A549 (cell line): ENCODE measurements at regions of chr5 and their contacts with region 1.

Region 1: DNA sequence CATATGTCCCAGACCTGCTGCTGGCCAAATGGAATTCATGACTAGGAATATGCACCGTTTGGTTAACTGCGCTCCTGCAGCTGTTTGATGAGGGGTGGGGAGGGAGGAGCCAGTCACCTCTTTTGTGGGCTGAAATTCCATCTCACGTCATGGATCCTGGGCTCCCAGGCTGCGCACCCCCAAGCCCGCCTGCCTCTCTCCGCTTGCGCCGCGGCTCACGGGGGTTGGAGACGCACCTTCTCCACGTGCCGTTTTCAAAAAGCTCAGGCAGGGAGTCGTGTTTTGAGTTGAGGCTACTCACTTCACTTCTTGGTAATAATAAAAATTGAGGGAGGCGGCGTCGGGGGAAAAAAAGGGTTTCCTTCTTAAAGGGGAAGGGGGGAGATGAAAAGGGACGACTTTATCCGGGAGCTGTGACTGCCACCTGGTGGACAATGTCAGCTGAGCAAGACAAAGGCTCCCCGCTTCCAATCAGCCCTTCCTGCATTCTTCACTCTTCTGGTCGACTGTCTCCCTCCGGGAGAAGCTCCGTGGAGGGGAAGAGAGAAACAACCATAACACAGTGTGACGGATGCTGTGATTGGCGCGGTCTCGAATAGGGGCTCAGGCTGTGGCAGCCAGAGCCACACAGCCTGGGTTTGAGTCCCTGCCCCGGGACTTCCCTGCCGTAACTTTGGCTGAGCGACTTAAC is 15.9 kb upstream of the C5orf47 start:
- DNase-seq: peak; percentile 83 to 86
- ATAC-seq: peak; percentile 55 to 72
- H3K4me3 ChIP-seq: peak overlapping the region; percentile 35; the same call in 2 of the 3 replicates
- H3K27ac ChIP-seq: peak overlapping the region; percentile 96 to 97
- H3K4me1 ChIP-seq: peaks cover 53% of the 10 kb centered on the region
- CTCF ChIP-seq: peak; percentile 94
- EP300 ChIP-seq: no peak
- POLR2A ChIP-seq: no peak
- RAD21 ChIP-seq: peak; percentile 97 to 99

Region 2: GRCh38 chr5:173887610-173888472 is 85.2 kb before region 1 on chr5 and contains the start of gene CPEB4:
- CTCF ChIA-PET with region 1: interaction called, 11 read pairs
- POLR2A ChIA-PET with region 1: interaction called, 8 read pairs
- DNase-seq: peak; percentile 99
- ATAC-seq: peak; percentile 97 to 98
- H3K4me3 ChIP-seq: peak within 1 kb of the TSS; percentile 83
- H3K27ac ChIP-seq: peak within 1 kb of the TSS; percentile 93 to 98
- H3K4me1 ChIP-seq: peaks cover 20% of the 10 kb centered on the region
- CTCF ChIP-seq: no peak
- EP300 ChIP-seq: no peak
- POLR2A ChIP-seq: peak; percentile 69
- RAD21 ChIP-seq: no peak; a peak in 1 of 5 replicates
- polyA plus RNA-seq, gene CPEB4: 49.1 and 50.0 TPM in 2 replicates

Region 3: GRCh38 chr5:173953528-173954090 is 19.5 kb before region 1 on chr5:
- CTCF ChIA-PET with region 1: interaction called, 11 read pairs
- POLR2A ChIA-PET with region 1: no interaction called
- DNase-seq: peak in 1 of 2 experiments; percentile 37
- ATAC-seq: peak; percentile 56 to 82; a peak in 5 of 6 replicates
- H3K4me3 ChIP-seq: no peak overlapping the region
- H3K27ac ChIP-seq: peak overlapping the region; percentile 38 to 52; a peak in 4 of 6 replicates
- H3K4me1 ChIP-seq: peaks cover 30% of the 10 kb centered on the region
- CTCF ChIP-seq: no peak
- EP300 ChIP-seq: no peak; a peak in 1 of 5 replicates
- POLR2A ChIP-seq: no peak
- RAD21 ChIP-seq: no peak

Region 4: DNA sequence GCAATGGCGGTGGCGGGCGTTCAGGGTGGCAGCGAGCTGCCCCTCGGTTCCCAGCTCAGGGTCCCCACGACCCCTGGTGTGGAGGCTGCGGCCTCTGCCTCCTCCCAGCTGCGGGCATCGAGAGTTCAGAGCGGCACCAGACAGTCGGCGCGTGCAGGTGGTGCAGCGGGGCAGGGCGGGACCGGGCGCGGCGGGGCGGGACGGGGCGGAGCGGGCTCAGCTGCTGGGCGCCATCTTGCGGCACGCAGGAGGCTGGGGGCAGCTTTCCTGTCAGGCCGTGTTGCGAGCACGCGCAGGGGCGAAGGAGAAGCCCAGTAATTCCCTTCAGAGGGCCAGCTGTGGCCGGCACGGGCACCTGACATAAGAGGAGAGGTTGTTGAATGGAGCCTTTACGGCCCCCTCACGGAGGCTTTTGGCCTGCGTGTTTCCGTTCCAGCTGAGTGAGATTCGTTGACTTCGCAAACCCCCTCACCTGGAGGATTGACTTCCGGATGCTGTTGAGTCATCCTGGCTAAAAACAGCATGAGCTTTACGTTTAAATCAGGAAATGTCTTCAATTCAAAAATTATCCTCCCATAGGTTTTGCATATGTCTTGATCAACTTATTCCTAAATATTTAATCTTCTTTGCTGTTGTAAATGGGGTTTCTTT is 16.5 kb after region 1 on chr5:
- CTCF ChIA-PET with region 1: interaction called, 43 read pairs
- POLR2A ChIA-PET with region 1: interaction called, 5 read pairs
- DNase-seq: no peak
- ATAC-seq: no peak
- H3K4me3 ChIP-seq: no peak overlapping the region
- H3K27ac ChIP-seq: no peak overlapping the region
- H3K4me1 ChIP-seq: no peaks in the 10 kb centered on the region
- CTCF ChIP-seq: no peak
- EP300 ChIP-seq: no peak
- POLR2A ChIP-seq: no peak
- RAD21 ChIP-seq: no peak

Region 5: DNA sequence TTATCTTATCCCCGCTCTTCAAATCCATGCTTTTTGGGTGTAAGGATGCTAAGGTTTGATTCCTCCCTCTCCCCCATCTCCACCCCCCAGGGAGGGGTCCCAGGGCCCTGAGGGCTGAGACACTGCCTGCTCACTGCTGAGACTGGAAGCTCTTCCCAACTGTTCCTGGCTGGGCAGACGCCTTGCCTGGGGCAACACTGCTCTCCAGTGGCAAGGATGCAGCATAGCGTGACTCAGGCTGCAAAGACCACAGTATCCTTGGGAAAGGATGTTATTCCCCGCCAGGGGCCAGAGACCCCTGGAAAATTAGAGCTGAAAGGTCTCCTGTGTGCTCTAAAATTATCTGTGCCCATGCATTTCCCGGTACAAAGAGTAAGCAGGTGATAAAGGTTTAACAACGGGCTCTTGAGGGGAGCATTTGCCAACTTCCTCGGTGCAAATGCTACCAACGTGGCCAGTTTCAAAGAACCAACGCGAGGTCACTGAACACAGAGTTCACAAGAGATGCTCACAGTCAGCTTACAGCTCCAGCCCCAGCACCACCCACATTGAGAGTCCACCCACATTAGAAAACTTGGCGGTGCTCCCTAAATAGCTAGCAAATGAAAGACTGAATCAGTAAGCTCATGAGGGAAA is 344.3 kb after region 1 on chr5:
- CTCF ChIA-PET with region 1: interaction called, 18 read pairs
- POLR2A ChIA-PET with region 1: no interaction called
- DNase-seq: peak; percentile 60 to 68
- ATAC-seq: peak; percentile 83 to 98
- H3K4me3 ChIP-seq: no peak overlapping the region
- H3K27ac ChIP-seq: no peak overlapping the region
- H3K4me1 ChIP-seq: no peaks in the 10 kb centered on the region
- CTCF ChIP-seq: peak; percentile 79
- EP300 ChIP-seq: no peak
- POLR2A ChIP-seq: no peak
- RAD21 ChIP-seq: peak; percentile 94 to 95

Region 6: DNA sequence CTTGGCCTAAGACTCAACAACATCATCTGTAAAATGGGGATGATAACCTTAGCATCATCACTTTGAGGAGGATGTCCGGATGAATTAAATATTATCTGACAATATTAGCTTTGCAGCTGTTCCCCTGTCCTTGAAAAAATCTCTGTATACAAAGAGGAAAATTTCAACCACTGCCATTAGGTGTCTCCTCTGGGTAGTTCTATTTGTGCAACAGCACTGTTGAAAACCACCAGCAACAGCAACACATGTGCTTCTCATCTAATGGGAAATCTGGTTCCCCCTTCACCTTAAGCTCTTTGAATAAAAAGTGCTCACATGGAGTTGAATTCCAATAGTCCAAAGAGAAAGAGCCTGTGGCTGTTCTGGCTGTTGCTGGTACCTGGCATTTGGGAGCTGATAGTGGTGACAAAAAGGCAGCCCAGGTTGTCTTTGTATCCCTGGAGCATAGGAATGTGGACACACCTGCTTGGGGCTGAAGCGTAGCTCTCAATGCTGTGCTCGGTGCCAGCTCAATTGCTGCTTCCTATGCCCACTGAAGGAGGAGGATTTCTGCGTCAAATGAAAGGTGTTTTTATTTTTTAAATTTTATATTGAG is 429.2 kb after region 1 on chr5:
- CTCF ChIA-PET with region 1: no interaction called
- POLR2A ChIA-PET with region 1: no interaction called
- DNase-seq: no peak
- ATAC-seq: peak; percentile 51 to 65; a peak in 2 of 6 replicates
- H3K4me3 ChIP-seq: no peak overlapping the region
- H3K27ac ChIP-seq: no peak overlapping the region
- H3K4me1 ChIP-seq: no peaks in the 10 kb centered on the region
- CTCF ChIP-seq: peak; percentile 16; the same call in 1 of the 3 replicates
- EP300 ChIP-seq: no peak
- POLR2A ChIP-seq: no peak
- RAD21 ChIP-seq: 0 out of 5 replicates have a peak, but pooled peaks of 1 of the 2 experiments have one; percentile 4